Prostate gland (tissue), 2 donors: ENCODE measurements at regions of chr11 and their contacts with region 1.

Region 1: DNA sequence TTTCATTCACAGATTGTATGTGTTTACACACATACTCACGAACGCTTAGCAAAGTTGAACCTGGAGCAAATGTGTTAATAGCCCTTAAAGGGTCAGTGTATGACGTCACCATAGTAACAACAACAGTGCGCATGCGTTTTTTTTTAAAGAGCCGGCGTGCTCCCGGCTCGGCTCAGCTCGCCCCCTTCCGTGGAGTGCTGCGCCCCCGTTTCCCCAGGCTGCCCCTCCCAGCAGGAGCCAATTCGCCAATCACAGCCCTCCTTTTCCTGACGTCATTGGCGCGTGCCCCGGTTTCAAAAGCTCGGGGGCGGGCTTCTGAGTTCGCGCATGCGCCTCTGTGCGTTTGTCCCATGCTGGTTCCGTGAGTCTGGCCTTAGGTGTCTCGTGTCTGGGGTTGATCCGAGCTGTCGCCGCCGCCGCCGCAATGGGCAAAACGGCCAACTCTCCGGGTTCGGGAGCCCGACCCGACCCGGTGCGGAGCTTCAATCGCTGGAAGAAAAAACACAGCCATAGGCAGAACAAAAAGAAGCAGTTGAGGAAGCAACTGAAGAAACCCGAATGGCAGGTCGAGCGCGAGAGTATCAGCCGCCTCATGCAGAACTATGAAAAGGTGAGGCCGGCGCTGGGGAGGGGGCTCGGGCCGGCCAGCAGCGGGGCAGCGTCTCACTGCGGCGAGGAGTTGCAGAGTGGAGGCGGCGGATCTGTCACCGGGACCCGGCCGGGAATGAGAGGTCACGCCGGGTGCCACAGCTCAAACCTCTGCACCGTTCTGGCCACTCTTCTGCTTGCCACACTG is at the start of gene DDX10:
- DNase-seq: peak; percentile 97
- H3K4me3 ChIP-seq: peak within 1 kb of the TSS; percentile 80 to 91
- H3K27ac ChIP-seq: peak within 1 kb of the TSS; percentile 59 to 72
- H3K4me1 ChIP-seq: peaks cover 6% of the 10 kb centered on the region
- H3K27me3 ChIP-seq: no peaks in the 10 kb centered on the region
- CTCF ChIP-seq: peak in 2 of 4 experiments; percentile 18 to 28
- POLR2A ChIP-seq: peak; percentile 17
- total RNA-seq, gene DDX10: 18.5 to 33.1 TPM

Region 2: DNA sequence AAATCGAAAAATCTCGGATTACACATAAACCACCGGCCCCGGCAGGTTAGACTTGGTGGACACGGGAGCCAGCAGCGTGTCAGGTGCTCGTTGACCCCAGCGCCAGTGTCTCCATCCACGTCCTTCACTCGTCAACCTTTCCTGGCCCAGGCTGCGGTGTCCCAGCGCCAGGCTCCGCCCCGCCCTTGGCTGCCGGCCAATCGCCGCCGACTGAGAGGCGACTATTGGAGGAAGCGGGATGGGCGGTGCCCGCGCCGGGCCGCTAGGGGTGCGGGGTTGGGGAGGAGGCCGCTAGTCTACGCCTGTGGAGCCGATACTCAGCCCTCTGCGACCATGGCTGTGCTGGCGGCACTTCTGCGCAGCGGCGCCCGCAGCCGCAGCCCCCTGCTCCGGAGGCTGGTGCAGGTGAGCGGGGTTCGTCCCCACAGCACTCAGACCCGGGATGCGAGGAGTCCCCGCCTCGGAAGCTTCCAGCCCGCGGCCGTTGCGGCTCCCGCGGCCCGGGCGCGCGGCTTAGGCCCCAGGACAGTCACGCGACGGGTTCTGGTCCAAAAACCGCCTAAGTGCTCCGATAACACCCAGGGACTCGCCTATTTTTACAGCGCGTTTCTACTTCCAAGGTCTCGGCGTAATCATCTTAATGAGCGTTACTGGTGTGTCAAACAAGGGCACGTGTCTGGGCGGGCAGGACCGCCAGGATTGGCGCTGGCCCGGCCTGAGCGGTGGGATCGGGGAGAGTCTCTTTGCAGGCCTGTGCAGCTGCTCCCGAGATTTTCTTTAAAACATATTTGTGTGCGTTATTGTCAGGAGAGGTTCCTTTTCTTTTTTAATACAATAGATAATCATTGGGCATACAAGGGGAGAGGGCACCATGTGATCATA is 543.4 kb before region 1 on chr11 and contains the start of gene ACAT1:
- intact Hi-C with region 1: loop called (anchors 5 kb)
- DNase-seq: peak; percentile 94
- H3K4me3 ChIP-seq: peak within 1 kb of the TSS; percentile 69 to 73
- H3K27ac ChIP-seq: peak within 1 kb of the TSS; percentile 87 to 89
- H3K4me1 ChIP-seq: peaks cover 4% of the 10 kb centered on the region
- H3K27me3 ChIP-seq: no peaks in the 10 kb centered on the region
- CTCF ChIP-seq: peak in 3 of 4 experiments; percentile 40 to 76 (median 69)
- POLR2A ChIP-seq: peak; percentile 70
- total RNA-seq, gene ACAT1: 65.1 to 152 TPM

Region 3: DNA sequence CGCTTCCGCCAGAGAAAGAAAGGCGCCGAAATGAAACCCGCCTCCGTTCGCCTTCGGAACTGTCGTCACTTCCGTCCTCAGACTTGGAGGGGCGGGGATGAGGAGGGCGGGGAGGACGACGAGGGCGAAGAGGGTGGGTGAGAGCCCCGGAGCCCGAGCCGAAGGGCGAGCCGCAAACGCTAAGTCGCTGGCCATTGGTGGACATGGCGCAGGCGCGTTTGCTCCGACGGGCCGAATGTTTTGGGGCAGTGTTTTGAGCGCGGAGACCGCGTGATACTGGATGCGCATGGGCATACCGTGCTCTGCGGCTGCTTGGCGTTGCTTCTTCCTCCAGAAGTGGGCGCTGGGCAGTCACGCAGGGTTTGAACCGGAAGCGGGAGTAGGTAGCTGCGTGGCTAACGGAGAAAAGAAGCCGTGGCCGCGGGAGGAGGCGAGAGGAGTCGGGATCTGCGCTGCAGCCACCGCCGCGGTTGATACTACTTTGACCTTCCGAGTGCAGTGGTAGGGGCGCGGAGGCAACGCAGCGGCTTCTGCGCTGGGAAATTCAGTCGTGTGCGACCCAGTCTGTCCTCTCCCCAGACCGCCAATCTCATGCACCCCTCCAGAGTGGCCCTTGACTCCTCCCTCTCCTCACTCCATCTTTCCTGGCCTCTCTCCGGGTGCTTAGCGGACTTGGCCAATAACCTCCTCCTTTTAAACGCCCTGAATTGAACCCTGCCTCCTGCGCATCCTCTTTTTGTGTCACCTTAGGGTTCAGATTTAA is 442.1 kb before region 1 on chr11 and contains the start of gene ATM:
- intact Hi-C with region 1: loop called (anchors 5 kb)
- DNase-seq: peak; percentile 99
- H3K4me3 ChIP-seq: peak within 1 kb of the TSS; percentile 69 to 76
- H3K27ac ChIP-seq: peak within 1 kb of the TSS; percentile 89 to 97
- H3K4me1 ChIP-seq: no peaks in the 10 kb centered on the region
- H3K27me3 ChIP-seq: no peaks in the 10 kb centered on the region
- CTCF ChIP-seq: peak; percentile 58 to 91 (median 77)
- POLR2A ChIP-seq: peak; percentile 6
- total RNA-seq, gene ATM: 32.9 to 80.9 TPM

Region 4: GRCh38 chr11:108467091-108467823 is 197.7 kb before region 1 on chr11 and contains the start of gene C11orf65:
- intact Hi-C with region 1: loop called (anchors 10 kb)
- DNase-seq: peak; percentile 97
- H3K4me3 ChIP-seq: peak within 1 kb of the TSS; percentile 52 to 65
- H3K27ac ChIP-seq: peak within 1 kb of the TSS; percentile 99
- H3K4me1 ChIP-seq: no peaks in the 10 kb centered on the region
- H3K27me3 ChIP-seq: no peaks in the 10 kb centered on the region
- CTCF ChIP-seq: no peak
- POLR2A ChIP-seq: peak; percentile 98
- total RNA-seq, gene C11orf65: 0.18 to 4.3 TPM

Region 5: DNA sequence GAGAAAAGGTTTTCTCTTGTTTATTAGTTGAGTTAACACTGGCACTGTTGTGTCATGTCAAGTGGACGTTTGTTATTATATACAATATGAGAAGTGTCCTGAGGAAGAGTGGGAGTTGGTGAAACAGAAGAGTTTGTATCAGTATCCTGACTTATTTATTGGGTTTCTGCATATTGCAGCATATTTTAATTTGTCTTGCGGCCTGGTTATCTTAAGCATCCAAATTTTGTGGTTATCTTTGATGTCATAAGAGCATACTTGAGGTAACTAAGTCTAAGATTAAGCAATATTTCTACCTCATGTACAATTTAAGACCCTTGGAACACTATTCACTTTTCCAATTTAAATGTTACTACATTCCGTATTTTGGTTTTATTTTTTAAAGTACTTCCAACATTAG is 103.4 kb after region 1 on chr11:
- intact Hi-C with region 1: no loop called
- DNase-seq: no peak
- H3K4me3 ChIP-seq: no peak overlapping the region
- H3K27ac ChIP-seq: no peak overlapping the region
- H3K4me1 ChIP-seq: no peaks in the 10 kb centered on the region
- H3K27me3 ChIP-seq: no peaks in the 10 kb centered on the region
- CTCF ChIP-seq: no peak
- POLR2A ChIP-seq: no peak

Region 6: DNA sequence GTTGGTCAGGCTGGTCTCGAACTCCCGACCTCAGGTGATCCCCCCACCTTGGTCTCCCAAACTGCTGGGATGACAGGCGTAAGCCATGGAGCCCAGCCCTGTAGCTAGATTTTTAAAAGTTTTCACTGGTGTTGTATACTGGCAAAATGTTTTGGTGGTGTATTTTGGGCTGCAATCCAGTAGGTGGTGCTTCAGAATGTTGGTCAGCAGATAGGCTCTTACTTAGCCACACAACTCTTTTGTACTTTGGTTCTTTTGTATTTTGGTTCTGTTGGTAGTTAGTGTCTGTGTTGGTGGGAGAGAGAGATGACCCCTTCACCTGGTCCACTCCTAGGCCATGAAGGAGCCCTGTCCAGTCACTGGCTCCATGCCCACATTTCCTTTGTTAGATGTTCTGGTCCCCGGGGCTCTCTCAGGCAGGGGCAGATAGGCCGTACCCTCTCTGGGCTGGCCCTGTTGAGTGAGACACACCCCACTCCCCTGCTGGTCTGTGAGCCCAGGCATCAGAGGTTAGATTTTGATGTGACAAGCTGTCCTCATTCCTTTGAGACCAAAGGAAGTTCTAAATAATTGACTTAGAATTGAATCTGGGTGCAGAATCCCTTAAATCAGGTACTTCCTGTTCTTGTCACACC is 123.8 kb after region 1 on chr11:
- intact Hi-C with region 1: no loop called
- DNase-seq: no peak
- H3K4me3 ChIP-seq: no peak overlapping the region
- H3K27ac ChIP-seq: no peak overlapping the region
- H3K4me1 ChIP-seq: no peaks in the 10 kb centered on the region
- H3K27me3 ChIP-seq: no peaks in the 10 kb centered on the region
- CTCF ChIP-seq: no peak
- POLR2A ChIP-seq: no peak